A549 (cell line): ENCODE measurements at regions of chr16 and their contacts with region 1.

Region 1: DNA sequence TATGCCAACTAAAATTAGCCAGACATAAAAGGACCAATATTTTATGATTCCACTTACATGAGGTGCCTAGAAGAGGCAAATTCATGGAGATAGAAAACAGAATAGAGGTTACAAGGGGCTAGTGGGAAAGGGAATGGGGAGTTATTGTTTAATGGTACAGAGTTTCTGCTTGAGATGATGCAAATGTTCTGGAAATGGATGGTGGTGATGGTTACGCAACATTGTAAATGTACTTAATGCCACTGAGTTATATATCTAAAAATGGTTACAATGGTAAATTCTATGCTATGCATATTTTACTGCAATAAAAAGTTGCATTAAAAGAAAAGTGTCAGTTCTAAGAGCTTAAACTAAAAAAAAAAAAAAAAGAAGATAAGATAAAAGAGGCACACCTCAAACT is 17.9 kb downstream of the MT1X start:
- DNase-seq: no peak
- ATAC-seq: no peak
- H3K4me3 ChIP-seq: no peak overlapping the region
- H3K27ac ChIP-seq: no peak overlapping the region; a peak in 1 of 6 replicates
- H3K4me1 ChIP-seq: peaks cover 2% of the 10 kb centered on the region; the same call in 1 of the 3 replicates
- CTCF ChIP-seq: no peak
- EP300 ChIP-seq: no peak
- POLR2A ChIP-seq: no peak
- RAD21 ChIP-seq: no peak

Region 2: DNA sequence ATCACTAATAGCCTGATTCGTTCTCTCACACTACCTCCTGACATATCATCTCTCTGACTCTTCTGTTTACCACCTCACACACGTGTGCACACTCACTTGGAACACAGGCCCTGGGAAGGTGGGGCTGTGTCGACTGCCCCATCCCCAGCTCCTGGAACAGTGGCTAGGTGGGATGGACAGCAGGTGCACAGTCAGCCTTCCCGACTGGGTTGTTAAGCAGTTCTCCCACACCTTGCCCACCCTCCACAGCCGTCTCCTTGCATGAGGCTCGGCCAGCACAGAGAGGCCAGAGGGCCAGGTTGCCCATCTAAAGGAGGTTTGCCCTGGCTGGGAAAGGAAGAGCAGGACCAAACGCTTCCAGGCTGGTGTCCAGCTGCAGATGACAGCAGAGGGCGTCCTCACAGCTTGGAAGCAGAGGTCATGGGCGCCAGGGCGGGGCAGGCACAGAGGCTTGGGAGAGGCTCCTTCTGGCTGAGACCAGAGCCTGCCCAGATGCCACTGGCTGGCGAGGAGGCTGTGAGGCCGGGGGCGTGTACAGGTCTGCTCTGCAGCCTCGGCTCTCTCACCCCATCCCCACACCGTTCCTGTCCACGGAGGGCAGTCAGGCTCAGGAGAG is 367.6 kb before region 1 on chr16:
- CTCF ChIA-PET with region 1: interaction called, 41 read pairs
- POLR2A ChIA-PET with region 1: no interaction called
- DNase-seq: peak; percentile 79 to 86
- ATAC-seq: peak; percentile 93 to 98
- H3K4me3 ChIP-seq: no peak overlapping the region
- H3K27ac ChIP-seq: peak overlapping the region; percentile 43 to 55; a peak in 2 of 6 replicates
- H3K4me1 ChIP-seq: peaks cover 4% of the 10 kb centered on the region; the same call in 2 of the 3 replicates
- CTCF ChIP-seq: peak; percentile 74
- EP300 ChIP-seq: no peak
- POLR2A ChIP-seq: no peak
- RAD21 ChIP-seq: peak; percentile 77 to 79

Region 3: DNA sequence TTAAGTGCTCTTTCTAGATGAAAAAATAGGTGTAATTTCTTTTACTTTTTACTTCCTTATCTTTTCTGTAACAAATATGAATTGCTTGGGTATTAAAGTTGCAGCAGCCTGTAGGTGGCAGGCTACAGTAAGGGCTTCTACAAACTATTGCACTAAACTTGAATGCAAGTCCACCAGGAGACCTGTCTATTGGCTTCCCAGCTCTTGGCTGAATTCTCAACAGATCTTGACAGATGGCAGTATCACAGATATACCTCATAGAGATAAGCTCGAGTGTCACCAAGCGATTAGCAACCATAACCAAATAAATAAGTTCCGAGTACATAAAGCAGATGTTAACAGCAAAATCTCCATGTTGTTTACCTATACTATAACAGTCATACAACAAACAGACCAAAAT is 186.2 kb before region 1 on chr16:
- CTCF ChIA-PET with region 1: interaction called, 44 read pairs
- POLR2A ChIA-PET with region 1: no interaction called
- DNase-seq: peak; percentile 51 to 81
- ATAC-seq: peak; percentile 89 to 95
- H3K4me3 ChIP-seq: no peak overlapping the region
- H3K27ac ChIP-seq: no peak overlapping the region
- H3K4me1 ChIP-seq: peaks cover 7% of the 10 kb centered on the region; the same call in 2 of the 3 replicates
- CTCF ChIP-seq: peak; percentile 85
- EP300 ChIP-seq: no peak
- POLR2A ChIP-seq: no peak
- RAD21 ChIP-seq: peak; percentile 74 to 75

Region 4: DNA sequence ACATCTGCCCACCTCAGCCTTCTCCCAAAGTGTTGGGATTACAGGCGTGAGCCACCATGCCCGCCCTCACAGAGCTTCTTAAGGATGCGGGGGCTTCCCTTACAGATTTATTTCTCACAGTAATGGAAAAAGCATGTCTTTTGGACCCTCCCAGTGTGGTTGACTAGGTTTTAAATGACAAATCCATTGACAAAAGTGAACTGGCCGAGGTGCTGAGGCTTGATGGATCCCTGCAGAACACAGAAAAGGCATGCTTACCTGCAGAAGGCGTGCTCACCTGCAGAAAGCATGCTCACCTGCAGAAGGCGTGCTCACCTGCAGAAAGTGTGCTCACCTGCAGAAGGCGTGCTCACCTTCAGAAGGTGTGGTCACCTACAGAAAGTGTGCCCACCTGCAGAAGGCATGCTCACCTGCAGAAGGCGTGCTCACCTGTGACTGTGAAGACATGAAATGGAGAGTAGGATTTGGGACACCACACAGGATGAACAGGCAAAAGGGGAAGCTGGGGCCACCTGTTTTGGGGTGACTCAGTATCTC is 165.3 kb before region 1 on chr16:
- CTCF ChIA-PET with region 1: no interaction called
- POLR2A ChIA-PET with region 1: no interaction called
- DNase-seq: no peak
- ATAC-seq: no peak
- H3K4me3 ChIP-seq: no peak overlapping the region
- H3K27ac ChIP-seq: no peak overlapping the region
- H3K4me1 ChIP-seq: no peaks in the 10 kb centered on the region
- CTCF ChIP-seq: no peak
- EP300 ChIP-seq: no peak
- POLR2A ChIP-seq: no peak
- RAD21 ChIP-seq: no peak

Region 5: DNA sequence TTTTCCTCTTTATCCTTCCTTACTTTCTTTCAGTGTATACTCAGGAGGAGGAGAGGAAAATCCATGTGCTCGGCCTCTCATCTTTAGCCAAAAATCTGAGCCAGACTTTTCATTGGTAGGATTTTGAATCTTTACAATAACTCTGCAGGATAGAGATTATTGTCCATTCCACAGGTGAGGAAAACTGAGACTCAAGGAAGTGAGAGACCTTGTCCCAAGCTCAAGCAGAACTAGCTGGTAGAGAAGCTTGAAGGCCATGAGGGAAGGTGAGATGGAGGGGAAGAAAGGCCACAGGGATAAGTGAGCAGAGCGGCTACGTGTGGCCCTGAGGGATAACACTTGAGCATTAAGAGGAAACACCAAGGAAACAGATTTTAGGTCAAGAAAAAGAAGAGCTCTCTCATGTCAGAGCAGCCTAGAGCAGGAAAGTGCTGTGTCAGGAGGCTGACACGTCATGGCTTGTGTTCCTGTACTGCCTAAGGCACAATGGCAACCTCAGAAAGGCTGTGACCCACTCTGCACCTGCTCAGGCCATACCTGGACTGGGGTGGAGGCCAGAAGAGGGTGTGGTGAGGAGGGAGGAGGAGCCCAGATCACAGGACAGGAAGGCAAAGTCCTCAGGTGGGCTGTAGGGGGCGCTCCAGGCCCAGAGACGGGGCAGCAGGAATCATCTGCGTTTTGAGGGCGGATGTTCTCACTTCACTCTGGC is 123.5 kb before region 1 on chr16:
- CTCF ChIA-PET with region 1: interaction called, 22 read pairs
- POLR2A ChIA-PET with region 1: no interaction called
- DNase-seq: peak; percentile 41 to 72
- ATAC-seq: peak; percentile 85 to 98
- H3K4me3 ChIP-seq: no peak overlapping the region
- H3K27ac ChIP-seq: no peak overlapping the region
- H3K4me1 ChIP-seq: peaks cover 2% of the 10 kb centered on the region; the same call in 2 of the 3 replicates
- CTCF ChIP-seq: peak; percentile 56
- EP300 ChIP-seq: no peak
- POLR2A ChIP-seq: no peak
- RAD21 ChIP-seq: peak; percentile 77 to 92

Region 6: DNA sequence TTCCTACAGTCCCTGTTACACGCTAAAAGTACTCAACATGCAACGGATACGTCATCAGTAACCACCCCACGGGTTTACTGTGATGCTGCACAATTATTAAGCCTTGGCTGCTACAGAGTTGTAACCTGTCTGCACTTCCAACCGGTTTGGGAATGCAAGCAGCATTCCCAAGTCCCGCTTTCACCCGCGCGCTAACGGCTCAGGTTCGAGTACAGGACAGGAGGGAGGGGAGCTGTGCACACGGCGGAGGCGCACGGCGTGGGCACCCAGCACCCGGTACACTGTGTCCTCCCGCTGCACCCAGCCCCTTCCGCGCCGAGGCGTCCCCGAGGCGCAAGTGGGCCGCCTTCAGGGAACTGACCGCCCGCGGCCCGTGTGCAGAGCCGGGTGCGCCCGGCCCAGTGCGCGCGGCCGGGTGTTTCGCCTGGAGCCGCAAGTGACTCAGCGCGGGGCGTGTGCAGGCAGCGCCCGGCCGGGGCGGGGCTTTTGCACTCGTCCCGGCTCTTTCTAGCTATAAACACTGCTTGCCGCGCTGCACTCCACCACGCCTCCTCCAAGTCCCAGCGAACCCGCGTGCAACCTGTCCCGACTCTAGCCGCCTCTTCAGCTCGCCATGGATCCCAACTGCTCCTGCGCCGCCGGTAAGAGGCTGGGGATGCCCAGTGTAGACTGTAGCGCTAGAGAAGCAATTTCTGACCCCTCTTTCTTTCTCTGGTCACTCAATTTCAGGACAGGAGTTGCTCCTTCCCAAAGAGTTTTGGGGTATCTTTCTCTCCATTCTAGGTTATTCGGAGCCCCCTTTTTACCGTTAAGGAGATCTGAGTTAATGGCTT is 91.9 kb before region 1 on chr16 and contains the start of gene MT2A:
- CTCF ChIA-PET with region 1: interaction called, 104 read pairs
- POLR2A ChIA-PET with region 1: interaction called, 12 read pairs
- DNase-seq: peak; percentile 92 to 97
- ATAC-seq: peak; percentile 67 to 83
- H3K4me3 ChIP-seq: peak within 1 kb of the TSS; percentile 61
- H3K27ac ChIP-seq: peak within 1 kb of the TSS; percentile 93 to 96
- H3K4me1 ChIP-seq: peaks cover 66% of the 10 kb centered on the region
- CTCF ChIP-seq: no peak
- EP300 ChIP-seq: no peak; a peak in 1 of 5 replicates
- POLR2A ChIP-seq: peak; percentile 66
- RAD21 ChIP-seq: peak in 1 of 2 experiments; percentile 26; a peak in 1 of 5 replicates
- polyA plus RNA-seq, gene MT2A: 39.1 and 69.4 TPM in 2 replicates

Region 7: GRCh38 chr16:56673921-56674320 is 26.3 kb before region 1 on chr16:
- CTCF ChIA-PET with region 1: interaction called, 51 read pairs
- POLR2A ChIA-PET with region 1: no interaction called
- DNase-seq: peak in 1 of 2 experiments; percentile 54
- ATAC-seq: peak; percentile 73 to 89; a peak in 5 of 6 replicates
- H3K4me3 ChIP-seq: no peak overlapping the region
- H3K27ac ChIP-seq: no peak overlapping the region
- H3K4me1 ChIP-seq: no peaks in the 10 kb centered on the region
- CTCF ChIP-seq: peak; percentile 53
- EP300 ChIP-seq: no peak
- POLR2A ChIP-seq: no peak
- RAD21 ChIP-seq: peak; percentile 70 to 77

Region 8: DNA sequence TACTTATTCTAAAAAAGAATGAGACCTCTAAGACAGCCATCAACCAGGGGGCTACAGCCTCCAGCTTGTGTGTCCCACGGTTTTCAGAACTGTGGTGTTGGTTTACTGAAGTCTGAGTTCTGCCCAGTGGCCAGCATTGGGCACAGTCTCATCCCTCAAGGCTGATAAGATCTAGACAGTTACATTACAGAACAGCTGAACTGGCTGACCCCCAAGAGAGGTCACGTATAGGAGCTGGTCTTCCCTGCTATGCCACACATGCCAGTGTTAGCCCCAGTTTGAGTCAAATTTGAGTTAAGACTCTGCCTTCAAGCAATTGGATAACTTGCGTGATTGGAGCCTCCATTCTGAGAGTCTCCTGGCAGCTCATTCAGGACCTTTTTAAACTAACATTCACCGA is 14.9 kb after region 1 on chr16:
- CTCF ChIA-PET with region 1: interaction called, 32 read pairs
- POLR2A ChIA-PET with region 1: no interaction called
- DNase-seq: no peak
- ATAC-seq: no peak
- H3K4me3 ChIP-seq: no peak overlapping the region
- H3K27ac ChIP-seq: no peak overlapping the region
- H3K4me1 ChIP-seq: no peaks in the 10 kb centered on the region
- CTCF ChIP-seq: no peak
- EP300 ChIP-seq: no peak
- POLR2A ChIP-seq: no peak
- RAD21 ChIP-seq: no peak

Region 9: GRCh38 chr16:56898847-56899246 is 198.7 kb after region 1 on chr16:
- CTCF ChIA-PET with region 1: no interaction called
- POLR2A ChIA-PET with region 1: no interaction called
- DNase-seq: no peak
- ATAC-seq: no peak
- H3K4me3 ChIP-seq: no peak overlapping the region
- H3K27ac ChIP-seq: no peak overlapping the region
- H3K4me1 ChIP-seq: no peaks in the 10 kb centered on the region
- CTCF ChIP-seq: no peak
- EP300 ChIP-seq: no peak
- POLR2A ChIP-seq: no peak
- RAD21 ChIP-seq: no peak